HCT116 (cell line): ENCODE measurements at regions of chr17 and their contacts with region 1.

Region 1: DNA sequence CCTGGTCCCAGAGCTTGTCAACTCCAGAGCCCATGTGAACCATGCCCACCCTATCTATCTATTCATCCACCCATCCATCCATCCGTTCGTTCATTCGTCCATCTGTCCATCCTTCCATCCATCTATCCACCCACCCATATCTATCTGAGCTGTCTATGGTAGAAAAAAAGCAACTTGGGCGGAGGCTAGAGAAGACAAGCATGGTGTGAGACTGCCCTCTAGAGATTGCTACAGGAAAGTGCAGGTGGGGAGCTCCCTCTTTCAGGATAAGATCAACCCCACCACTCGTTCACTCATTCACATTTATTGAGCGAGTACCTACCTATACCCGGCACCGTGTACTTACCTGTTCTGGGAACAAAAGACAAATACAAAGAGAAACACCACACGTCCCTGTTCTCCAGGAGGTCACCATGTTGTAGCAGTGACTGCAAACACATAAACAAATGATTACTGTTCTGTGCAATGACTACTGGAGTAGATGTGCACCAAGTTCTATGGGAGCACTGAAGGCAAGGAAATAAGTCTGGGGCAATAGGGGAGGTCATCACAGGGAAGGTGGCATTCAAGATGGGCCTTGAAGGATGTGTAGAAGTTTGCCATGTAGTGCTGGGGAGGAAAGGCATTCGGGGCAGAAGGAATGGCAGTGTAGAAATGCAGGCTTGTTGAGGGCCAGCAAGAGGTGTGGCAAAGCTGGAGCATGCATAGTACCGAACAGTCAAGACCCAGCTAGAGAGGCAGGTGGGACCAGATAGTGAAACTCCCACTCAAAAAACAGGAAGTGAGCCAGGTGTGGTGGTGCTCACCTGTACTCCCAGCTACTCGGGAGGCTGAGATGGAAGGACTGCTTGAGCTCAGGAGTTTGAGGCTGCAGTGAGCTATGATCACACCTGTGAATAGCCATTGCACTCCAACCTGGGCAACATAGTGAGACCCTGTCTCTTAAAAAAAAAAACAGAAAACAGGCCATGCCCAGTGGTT is 13.4 kb upstream of the ATP5MC1 start:
- DNase-seq: peak; percentile 82
- ATAC-seq: peak; percentile 93
- H3K4me3 ChIP-seq: no peak overlapping the region
- H3K27ac ChIP-seq: no peak overlapping the region
- H3K4me1 ChIP-seq: peaks cover 0 to 2% of the 10 kb centered on the region in 2 experiments; a peak in 1 of 4 replicates
- H3K27me3 ChIP-seq: no peaks in the 10 kb centered on the region
- CTCF ChIP-seq: peak; percentile 97 to 100 (median 99)
- POLR2A ChIP-seq: no peak
- RAD21 ChIP-seq: peak; percentile 100

Region 2: DNA sequence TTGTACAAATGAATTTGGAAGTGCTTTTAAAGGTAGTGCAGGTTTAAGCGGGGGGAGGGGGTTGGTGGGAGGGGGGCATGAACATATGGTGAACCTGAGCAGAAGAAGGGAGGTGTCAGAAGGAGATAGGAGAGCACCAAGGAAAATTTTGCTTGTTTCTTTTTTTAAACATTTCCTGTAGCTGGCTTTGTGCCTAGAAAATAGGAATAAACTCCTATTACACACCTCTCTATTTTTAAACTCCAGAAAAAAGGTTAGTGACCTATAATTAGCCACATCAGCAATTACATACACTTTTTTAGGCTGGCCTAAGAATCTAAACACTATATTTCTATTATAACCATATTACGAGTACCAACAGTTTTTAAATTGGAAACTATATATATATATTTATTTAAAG is 608.3 kb before region 1 on chr17:
- CTCF ChIA-PET with region 1: no interaction called
- POLR2A ChIA-PET with region 1: no interaction called
- RAD21 ChIA-PET with region 1: no interaction called
- intact Hi-C with region 1: no loop called
- DNase-seq: no peak
- ATAC-seq: no peak
- H3K4me3 ChIP-seq: no peak overlapping the region
- H3K27ac ChIP-seq: no peak overlapping the region
- H3K4me1 ChIP-seq: peaks cover 12 to 18% of the 10 kb centered on the region in 2 experiments
- H3K27me3 ChIP-seq: no peaks in the 10 kb centered on the region
- CTCF ChIP-seq: no peak
- POLR2A ChIP-seq: no peak
- RAD21 ChIP-seq: no peak

Region 3: DNA sequence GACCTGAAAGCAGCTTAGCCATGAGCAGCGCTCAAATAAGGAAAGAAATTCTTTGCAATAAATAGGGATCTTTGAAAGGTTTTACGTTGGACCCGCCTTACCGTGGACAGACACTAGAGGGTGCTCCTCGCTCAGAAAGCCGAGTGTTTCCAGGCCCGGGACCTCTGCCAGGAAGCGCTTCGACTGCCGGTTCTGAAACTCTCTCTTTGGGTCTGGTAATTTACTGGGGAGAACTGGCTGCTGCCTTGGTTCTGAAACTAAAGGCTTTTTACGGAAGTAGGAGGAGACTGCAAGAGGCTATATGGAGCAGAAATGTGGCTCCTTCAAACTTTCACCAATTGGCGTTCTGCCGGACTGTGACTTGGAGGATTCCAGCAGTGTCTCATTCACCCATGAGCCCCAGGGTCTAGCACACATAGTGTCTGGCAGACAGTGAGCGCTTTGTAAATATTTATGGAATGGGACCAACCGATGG is 207.5 kb before region 1 on chr17:
- CTCF ChIA-PET with region 1: interaction called, 221 read pairs
- POLR2A ChIA-PET with region 1: interaction called, 3 read pairs
- RAD21 ChIA-PET with region 1: interaction called, 4 to 29 read pairs
- intact Hi-C with region 1: no loop called
- DNase-seq: peak; percentile 59
- ATAC-seq: peak; percentile 87
- H3K4me3 ChIP-seq: peak overlapping the region; percentile 21 to 52
- H3K27ac ChIP-seq: no peak overlapping the region
- H3K4me1 ChIP-seq: peaks cover 0 to 10% of the 10 kb centered on the region in 2 experiments; a peak in 3 of 4 replicates
- H3K27me3 ChIP-seq: no peaks in the 10 kb centered on the region
- CTCF ChIP-seq: peak; percentile 92 to 99 (median 98)
- POLR2A ChIP-seq: no peak
- RAD21 ChIP-seq: peak; percentile 94

Region 4: GRCh38 chr17:48724251-48725003 is 154.8 kb before region 1 on chr17:
- CTCF ChIA-PET with region 1: interaction called, 60 read pairs
- POLR2A ChIA-PET with region 1: interaction called, 7 read pairs
- RAD21 ChIA-PET with region 1: interaction called, 8 to 11 read pairs
- intact Hi-C with region 1: loop called (anchors 1 kb)
- DNase-seq: peak; percentile 32
- ATAC-seq: peak; percentile 74
- H3K4me3 ChIP-seq: no peak overlapping the region
- H3K27ac ChIP-seq: no peak overlapping the region
- H3K4me1 ChIP-seq: peaks cover 5 to 21% of the 10 kb centered on the region in 2 experiments; a peak in 3 of 4 replicates
- H3K27me3 ChIP-seq: no peaks in the 10 kb centered on the region
- CTCF ChIP-seq: peak; percentile 85 to 90 (median 87)
- POLR2A ChIP-seq: no peak
- RAD21 ChIP-seq: peak; percentile 91

Region 5: GRCh38 chr17:48804925-48805411 is 74.2 kb before region 1 on chr17:
- CTCF ChIA-PET with region 1: interaction called, 237 read pairs
- POLR2A ChIA-PET with region 1: interaction called, 18 read pairs
- RAD21 ChIA-PET with region 1: interaction called, 29 to 37 read pairs
- intact Hi-C with region 1: loop called (anchors 1 kb)
- DNase-seq: peak; percentile 77
- ATAC-seq: peak; percentile 100
- H3K4me3 ChIP-seq: peak overlapping the region in 1 of 2 experiments; percentile 4; a peak in 2 of 4 replicates
- H3K27ac ChIP-seq: no peak overlapping the region
- H3K4me1 ChIP-seq: peaks cover 4 to 11% of the 10 kb centered on the region in 2 experiments; a peak in 3 of 4 replicates
- H3K27me3 ChIP-seq: no peaks in the 10 kb centered on the region
- CTCF ChIP-seq: peak; percentile 97 to 100 (median 100)
- POLR2A ChIP-seq: no peak
- RAD21 ChIP-seq: peak; percentile 99

Region 6: GRCh38 chr17:48825446-48826381 is 53.5 kb before region 1 on chr17:
- CTCF ChIA-PET with region 1: interaction called, 15 read pairs
- POLR2A ChIA-PET with region 1: no interaction called
- RAD21 ChIA-PET with region 1: interaction called in 1 of 2 experiments, 3 read pairs
- intact Hi-C with region 1: no loop called
- DNase-seq: no peak
- ATAC-seq: peak; percentile 37; the same call in 1 of the 2 replicates
- H3K4me3 ChIP-seq: no peak overlapping the region
- H3K27ac ChIP-seq: no peak overlapping the region
- H3K4me1 ChIP-seq: peaks cover 2 to 32% of the 10 kb centered on the region in 2 experiments; a peak in 2 of 4 replicates
- H3K27me3 ChIP-seq: no peaks in the 10 kb centered on the region
- CTCF ChIP-seq: no peak
- POLR2A ChIP-seq: no peak
- RAD21 ChIP-seq: no peak

Region 7: GRCh38 chr17:48860034-48860433 is 19.2 kb before region 1 on chr17:
- CTCF ChIA-PET with region 1: interaction called, 11 read pairs
- POLR2A ChIA-PET with region 1: no interaction called
- RAD21 ChIA-PET with region 1: no interaction called
- intact Hi-C with region 1: no loop called
- DNase-seq: no peak
- ATAC-seq: peak; percentile 80
- H3K4me3 ChIP-seq: no peak overlapping the region
- H3K27ac ChIP-seq: no peak overlapping the region
- H3K4me1 ChIP-seq: no peaks in the 10 kb centered on the region
- H3K27me3 ChIP-seq: no peaks in the 10 kb centered on the region
- CTCF ChIP-seq: peak in 2 of 3 experiments; percentile 47 to 55; a peak in 4 of 6 replicates
- POLR2A ChIP-seq: no peak
- RAD21 ChIP-seq: no peak